AG04450 (cell line): ENCODE measurements at regions of chr4 and their contacts with region 1.

Region 1: DNA sequence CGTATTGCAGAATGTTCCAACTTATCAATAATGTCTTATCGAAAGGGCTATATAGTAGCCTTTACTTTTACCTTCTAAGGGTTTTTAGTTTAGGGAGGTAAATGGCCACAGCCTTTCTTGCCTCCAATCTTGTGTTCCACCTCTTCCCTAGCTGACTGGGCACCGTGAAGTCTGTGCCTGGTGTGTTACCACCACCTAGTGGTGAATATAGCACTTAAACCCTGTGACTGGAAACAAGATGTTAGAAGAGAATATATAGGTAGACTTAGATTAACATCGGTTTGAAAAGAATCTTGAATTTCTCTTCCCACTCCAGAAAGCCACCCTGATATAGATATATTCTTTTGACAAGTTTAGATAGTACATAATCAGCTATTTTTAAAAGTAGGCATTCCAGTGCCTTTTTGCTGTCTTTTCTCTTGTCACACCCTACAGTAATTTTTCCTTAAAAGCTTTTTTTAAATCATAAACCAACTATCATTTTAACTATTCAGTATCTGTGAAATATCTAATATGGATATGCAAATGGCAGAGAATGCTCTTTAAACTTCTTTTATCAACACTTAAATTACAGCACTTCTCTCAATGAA is 27.8 kb upstream of the ADH7 start:
- DNase-seq: peak; percentile 39
- H3K4me3 ChIP-seq: no peak overlapping the region
- H3K27ac ChIP-seq: no peak overlapping the region
- H3K27me3 ChIP-seq: peaks cover 2% of the 10 kb centered on the region
- CTCF ChIP-seq: peak; percentile 88

Region 2: GRCh38 chr4:99117876-99118693 is 344.9 kb before region 1 on chr4:
- CTCF ChIA-PET with region 1: interaction called, 35 read pairs
- POLR2A ChIA-PET with region 1: no interaction called
- DNase-seq: no peak
- H3K4me3 ChIP-seq: no peak overlapping the region
- H3K27ac ChIP-seq: no peak overlapping the region
- H3K27me3 ChIP-seq: no peaks in the 10 kb centered on the region
- CTCF ChIP-seq: peak; percentile 45; the same call in 1 of the 2 replicates

Region 3: DNA sequence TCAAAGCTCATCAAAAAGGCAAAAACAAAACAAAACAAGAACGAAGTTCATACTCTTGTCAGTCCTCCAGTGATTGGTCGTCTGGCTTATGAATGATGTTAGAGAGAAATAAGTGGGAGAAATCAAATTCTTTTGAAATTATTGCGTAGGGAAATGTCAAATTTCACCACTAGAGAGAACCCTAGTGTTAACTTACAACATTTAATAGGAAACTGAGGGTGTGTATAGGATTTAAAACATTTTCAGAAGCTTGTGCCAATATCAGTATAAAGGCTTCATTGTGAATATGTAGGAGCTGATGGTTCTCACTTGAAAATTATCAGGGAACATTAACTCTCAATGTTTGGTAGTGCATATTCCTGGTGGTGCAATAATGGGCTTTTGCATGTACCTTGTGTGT is 261.3 kb before region 1 on chr4:
- CTCF ChIA-PET with region 1: interaction called, 54 read pairs
- POLR2A ChIA-PET with region 1: no interaction called
- DNase-seq: no peak
- H3K4me3 ChIP-seq: no peak overlapping the region
- H3K27ac ChIP-seq: no peak overlapping the region
- H3K27me3 ChIP-seq: no peaks in the 10 kb centered on the region
- CTCF ChIP-seq: peak; percentile 45

Region 4: GRCh38 chr4:99414389-99414788 is 48.6 kb before region 1 on chr4:
- CTCF ChIA-PET with region 1: interaction called, 14 read pairs
- POLR2A ChIA-PET with region 1: no interaction called
- DNase-seq: no peak
- H3K4me3 ChIP-seq: no peak overlapping the region
- H3K27ac ChIP-seq: no peak overlapping the region
- H3K27me3 ChIP-seq: peaks cover 2% of the 10 kb centered on the region
- CTCF ChIP-seq: no peak

Region 5: GRCh38 chr4:99447079-99447478 is 15.9 kb before region 1 on chr4:
- CTCF ChIA-PET with region 1: interaction called, 14 read pairs
- POLR2A ChIA-PET with region 1: no interaction called
- DNase-seq: peak; percentile 7
- H3K4me3 ChIP-seq: no peak overlapping the region
- H3K27ac ChIP-seq: no peak overlapping the region
- H3K27me3 ChIP-seq: peaks cover 2% of the 10 kb centered on the region
- CTCF ChIP-seq: no peak